GM12878 (cell line): ENCODE measurements at regions of chr6 and their contacts with region 1.

Region 1: GRCh38 chr6:47535316-47536225 is 58.0 kb downstream of the CD2AP start:
- DNase-seq: no peak
- ATAC-seq: peak; percentile 62
- H3K4me3 ChIP-seq: no peak overlapping the region
- H3K27ac ChIP-seq: no peak overlapping the region
- H3K4me1 ChIP-seq: peaks cover 4% of the 10 kb centered on the region; the same call in 1 of the 2 replicates
- H3K27me3 ChIP-seq: no peaks in the 10 kb centered on the region
- CTCF ChIP-seq: no peak
- EP300 ChIP-seq: no peak
- POLR2A ChIP-seq: no peak
- RAD21 ChIP-seq: no peak

Region 2: GRCh38 chr6:47512872-47513271 is 22.7 kb before region 1 on chr6:
- CTCF ChIA-PET with region 1: no interaction called
- POLR2A ChIA-PET with region 1: interaction called, 11 read pairs
- RAD21 ChIA-PET with region 1: no interaction called
- SMC1A ChIA-PET with region 1: no interaction called
- in situ Hi-C with region 1: no loop called
- intact Hi-C with region 1: no loop called
- DNase-seq: no peak
- ATAC-seq: no peak
- H3K4me3 ChIP-seq: no peak overlapping the region
- H3K27ac ChIP-seq: no peak overlapping the region
- H3K4me1 ChIP-seq: peaks cover 4% of the 10 kb centered on the region
- H3K27me3 ChIP-seq: no peaks in the 10 kb centered on the region
- CTCF ChIP-seq: no peak
- EP300 ChIP-seq: no peak
- POLR2A ChIP-seq: no peak
- RAD21 ChIP-seq: no peak